OCI-LY7 (cell line): ENCODE measurements at regions of chr15 and their contacts with region 1.

Region 1: GRCh38 chr15:88620995-88621772 is at the start of gene AEN:
- DNase-seq: peak; percentile 96
- H3K4me3 ChIP-seq: peak within 1 kb of the TSS; percentile 99
- H3K27ac ChIP-seq: peak within 1 kb of the TSS; percentile 73
- H3K4me1 ChIP-seq: peaks cover 37% of the 10 kb centered on the region
- CTCF ChIP-seq: no peak
- total RNA-seq, gene AEN: 55.9 and 66.6 TPM in 2 replicates

Region 2: DNA sequence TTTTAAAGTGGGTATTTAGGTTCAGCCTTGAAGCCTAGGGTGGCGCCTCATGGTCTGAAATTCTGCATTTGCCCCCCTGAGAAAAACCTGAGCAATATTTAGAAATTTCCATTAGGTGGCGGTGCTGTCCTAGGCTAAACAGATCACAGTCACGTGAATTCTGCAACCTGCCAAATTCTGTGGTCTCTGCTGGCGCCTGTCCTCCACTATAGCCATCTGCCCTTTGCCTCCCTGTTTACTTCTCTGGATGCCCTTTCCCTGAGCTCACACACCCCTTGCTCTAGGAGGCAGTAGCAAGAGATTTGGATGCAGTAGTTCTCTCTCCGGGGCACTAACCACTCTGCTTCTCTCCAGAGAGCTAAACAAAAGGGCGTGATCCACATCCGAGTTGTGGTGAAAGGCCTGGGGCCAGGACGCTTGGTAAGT is 144.5 kb before region 1 on chr15:
- CTCF ChIA-PET with region 1: no interaction called
- POLR2A ChIA-PET with region 1: no interaction called
- intact Hi-C with region 1: loop called (anchors 2 kb)
- DNase-seq: peak; percentile 63
- H3K4me3 ChIP-seq: no peak overlapping the region
- H3K27ac ChIP-seq: no peak overlapping the region
- H3K4me1 ChIP-seq: peaks cover 6% of the 10 kb centered on the region
- CTCF ChIP-seq: peak; percentile 82

Region 3: DNA sequence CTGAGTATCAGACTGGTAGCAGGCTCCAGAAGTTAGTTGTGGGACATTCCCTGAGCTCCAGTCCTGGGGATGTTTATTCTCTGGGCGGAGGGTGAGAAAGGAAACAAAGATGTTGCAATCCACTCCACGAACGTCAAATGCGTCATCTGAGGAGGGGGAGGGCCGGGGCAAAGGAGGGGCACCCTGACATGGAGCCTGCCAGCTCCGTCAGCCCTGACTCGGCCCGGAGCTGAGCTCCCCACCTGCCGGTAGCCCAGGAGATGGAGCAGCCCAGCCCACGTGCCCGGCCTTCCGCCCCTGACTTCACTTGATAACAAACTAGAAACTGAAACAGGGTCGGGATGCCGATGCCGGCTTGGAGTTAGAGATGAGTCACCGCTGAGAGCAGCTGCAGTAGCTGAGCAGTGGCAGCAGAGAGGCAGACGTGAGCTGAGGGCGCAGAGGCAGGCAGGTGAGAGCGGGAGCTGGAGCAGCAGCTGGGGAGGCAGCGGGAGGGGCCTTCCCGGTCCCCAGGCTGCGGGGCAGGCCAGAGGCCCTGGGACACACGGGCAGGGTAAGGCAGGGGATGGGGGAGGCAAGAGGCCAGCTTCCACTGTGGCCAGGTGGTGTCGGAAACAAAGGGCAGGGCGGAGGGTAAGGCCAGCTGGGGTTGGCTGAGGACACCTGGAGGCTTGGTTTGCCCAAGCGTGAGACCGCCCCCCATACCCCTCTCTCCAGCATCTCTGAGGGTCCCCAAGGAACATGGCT is 17.6 kb after region 1 on chr15 and contains the start of gene ISG20:
- CTCF ChIA-PET with region 1: no interaction called
- POLR2A ChIA-PET with region 1: interaction called, 12 read pairs
- intact Hi-C with region 1: loop called (anchors 1 kb)
- DNase-seq: peak; percentile 97
- H3K4me3 ChIP-seq: peak within 1 kb of the TSS; percentile 81
- H3K27ac ChIP-seq: peak within 1 kb of the TSS; percentile 97
- H3K4me1 ChIP-seq: peaks cover 89% of the 10 kb centered on the region
- CTCF ChIP-seq: peak; percentile 60
- total RNA-seq, gene ISG20: 345 and 502 TPM in 2 replicates

Region 4: GRCh38 chr15:88664151-88664778 is 43.1 kb after region 1 on chr15:
- CTCF ChIA-PET with region 1: interaction called, 12 read pairs
- POLR2A ChIA-PET with region 1: interaction called, 7 read pairs
- intact Hi-C with region 1: loop called (anchors 1 kb)
- DNase-seq: peak; percentile 73
- H3K4me3 ChIP-seq: no peak overlapping the region
- H3K27ac ChIP-seq: no peak overlapping the region
- H3K4me1 ChIP-seq: peaks cover 6% of the 10 kb centered on the region
- CTCF ChIP-seq: peak; percentile 84

Region 5: DNA sequence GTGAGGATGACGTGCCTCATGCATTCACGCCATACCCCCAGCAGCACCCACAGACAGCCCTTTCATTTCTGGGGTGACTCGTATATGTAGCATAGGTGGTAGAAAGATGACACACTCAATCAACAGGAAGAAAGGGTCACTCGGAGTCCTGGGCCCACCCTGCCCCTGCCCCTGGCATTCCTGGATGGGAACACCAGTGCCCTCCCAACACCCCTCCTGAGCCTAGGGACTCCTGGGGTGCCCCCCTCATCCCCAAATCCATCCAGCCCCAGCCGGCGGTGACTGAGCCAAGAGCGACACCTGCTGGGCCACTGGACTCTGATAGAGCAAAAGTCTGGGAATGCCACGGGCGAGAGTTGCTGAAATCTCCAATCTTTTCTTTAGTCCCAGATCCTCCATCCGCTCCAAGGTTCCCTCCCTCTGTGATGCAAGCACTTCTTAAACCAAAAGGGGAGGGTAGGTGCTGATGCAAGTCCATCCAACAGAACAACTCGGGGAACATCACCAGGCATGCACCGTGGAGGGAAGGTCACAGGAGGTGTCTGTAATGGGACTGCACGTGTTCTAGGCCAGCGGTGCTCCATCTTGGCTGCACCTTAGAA is 213.1 kb after region 1 on chr15:
- CTCF ChIA-PET with region 1: no interaction called
- POLR2A ChIA-PET with region 1: no interaction called
- intact Hi-C with region 1: loop called (anchors 5 kb)
- DNase-seq: peak; percentile 16
- H3K4me3 ChIP-seq: no peak overlapping the region
- H3K27ac ChIP-seq: no peak overlapping the region
- H3K4me1 ChIP-seq: no peaks in the 10 kb centered on the region
- CTCF ChIP-seq: peak; percentile 77

Region 6: GRCh38 chr15:89087830-89088604 is 466.8 kb after region 1 on chr15 and contains the start of gene ABHD2:
- CTCF ChIA-PET with region 1: no interaction called
- POLR2A ChIA-PET with region 1: no interaction called
- intact Hi-C with region 1: loop called (anchors 10 kb)
- DNase-seq: peak; percentile 100
- H3K4me3 ChIP-seq: peak within 1 kb of the TSS; percentile 88
- H3K27ac ChIP-seq: peak within 1 kb of the TSS; percentile 25
- H3K4me1 ChIP-seq: peaks cover 28% of the 10 kb centered on the region
- CTCF ChIP-seq: no peak
- total RNA-seq, gene ABHD2: 12.6 and 16.1 TPM in 2 replicates